K562 (cell line): ENCODE measurements at regions of chr11 and their contacts with region 1.

Region 1: GRCh38 chr11:93543292-93543977 is at the start of gene SMCO4:
- DNase-seq: peak; percentile 85 to 90 (median 87)
- ATAC-seq: peak; percentile 94
- H3K4me3 ChIP-seq: peak within 1 kb of the TSS; percentile 72
- H3K27ac ChIP-seq: peak within 1 kb of the TSS; percentile 38
- H3K4me1 ChIP-seq: peaks cover 13 to 14% of the 10 kb centered on the region in 2 experiments
- H3K27me3 ChIP-seq: no peaks in the 10 kb centered on the region; a peak in 1 of 5 replicates
- CTCF ChIP-seq: peak; percentile 60 to 87 (median 86)
- EP300 ChIP-seq: 0 out of 2 replicates have a peak, but pooled peaks have one; percentile 20
- POLR2A ChIP-seq: peak; percentile 56
- RAD21 ChIP-seq: peak; percentile 82 to 83
- polyA plus RNA-seq, gene SMCO4: 1.8 to 2.2 TPM

Region 2: DNA sequence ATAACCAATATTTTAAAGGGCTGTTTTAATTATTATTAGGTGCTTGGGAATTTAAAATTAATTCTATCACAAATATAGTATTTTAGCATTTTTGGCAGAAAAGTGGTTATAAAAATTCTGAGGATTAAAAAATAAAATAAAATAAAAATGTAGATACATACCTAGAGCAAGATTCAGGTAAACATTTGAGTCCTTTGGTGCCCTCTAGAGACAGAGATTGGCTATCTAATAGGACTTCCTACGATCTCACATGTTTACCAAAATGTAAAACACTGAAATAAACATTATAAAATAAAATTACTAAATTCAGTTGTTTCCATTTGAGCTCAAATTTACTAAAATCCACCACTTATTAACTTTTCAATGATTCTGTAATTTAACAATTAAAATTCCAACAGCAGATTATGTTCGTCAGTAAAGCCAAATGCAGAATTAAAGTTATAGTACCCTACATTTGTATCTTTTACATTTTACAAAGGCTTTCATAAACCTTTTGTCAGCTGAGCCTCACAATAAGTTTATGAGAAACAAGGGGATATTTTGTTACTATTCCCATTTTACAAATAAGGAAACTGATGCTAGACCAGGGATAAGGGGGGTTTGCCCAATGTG is 373.4 kb before region 1 on chr11:
- CTCF ChIA-PET with region 1: no interaction called
- POLR2A ChIA-PET with region 1: no interaction called
- in situ Hi-C with region 1: no loop called
- intact Hi-C with region 1: no loop called
- DNase-seq: peak in 1 of 4 experiments; percentile 24
- ATAC-seq: peak; percentile 54; the same call in 1 of the 3 replicates
- H3K4me3 ChIP-seq: no peak overlapping the region
- H3K27ac ChIP-seq: no peak overlapping the region
- H3K4me1 ChIP-seq: no peaks in the 10 kb centered on the region
- H3K27me3 ChIP-seq: no peaks in the 10 kb centered on the region; a peak in 1 of 5 replicates
- CTCF ChIP-seq: peak in 2 of 3 experiments; percentile 12 to 41; a peak in 3 of 6 replicates
- EP300 ChIP-seq: no peak
- POLR2A ChIP-seq: no peak
- RAD21 ChIP-seq: peak; percentile 35 to 51; a peak in 3 of 4 replicates

Region 3: DNA sequence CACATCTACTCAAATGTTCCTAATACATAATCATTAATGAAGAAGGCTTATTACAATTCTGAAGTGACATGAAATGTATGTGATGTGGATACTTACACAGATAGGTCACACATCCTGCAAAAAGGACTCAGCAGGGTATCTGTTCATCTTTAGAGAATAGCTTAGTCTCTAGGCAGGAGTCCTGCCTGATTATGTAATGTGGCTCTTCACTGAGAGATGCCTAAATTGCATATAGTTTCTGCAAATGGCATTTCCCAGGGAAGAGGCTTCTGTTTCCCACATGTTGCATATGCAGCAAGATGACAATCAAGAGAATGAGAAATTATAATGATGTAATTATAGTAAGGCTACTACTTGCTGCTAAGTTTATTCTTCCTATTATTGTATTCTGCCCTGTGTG is 286.8 kb before region 1 on chr11:
- CTCF ChIA-PET with region 1: no interaction called
- POLR2A ChIA-PET with region 1: no interaction called
- in situ Hi-C with region 1: no loop called
- intact Hi-C with region 1: no loop called
- DNase-seq: no peak
- ATAC-seq: no peak
- H3K4me3 ChIP-seq: no peak overlapping the region
- H3K27ac ChIP-seq: no peak overlapping the region
- H3K4me1 ChIP-seq: no peaks in the 10 kb centered on the region
- H3K27me3 ChIP-seq: no peaks in the 10 kb centered on the region
- CTCF ChIP-seq: no peak
- EP300 ChIP-seq: no peak
- POLR2A ChIP-seq: no peak
- RAD21 ChIP-seq: no peak

Region 4: GRCh38 chr11:93330446-93330984 is 212.9 kb before region 1 on chr11 and contains the start of gene DEUP1:
- CTCF ChIA-PET with region 1: no interaction called
- POLR2A ChIA-PET with region 1: no interaction called
- in situ Hi-C with region 1: no loop called
- intact Hi-C with region 1: loop called (anchors 10 kb)
- DNase-seq: peak; percentile 75 to 85 (median 82)
- ATAC-seq: peak; percentile 95
- H3K4me3 ChIP-seq: peak within 1 kb of the TSS; percentile 51
- H3K27ac ChIP-seq: peak within 1 kb of the TSS; percentile 78
- H3K4me1 ChIP-seq: peaks cover 6 to 7% of the 10 kb centered on the region in 2 experiments; a peak in 2 of 5 replicates
- H3K27me3 ChIP-seq: no peaks in the 10 kb centered on the region
- CTCF ChIP-seq: no peak
- EP300 ChIP-seq: 0 out of 2 replicates have a peak, but pooled peaks have one; percentile 18
- POLR2A ChIP-seq: peak; percentile 60; the same call in 1 of the 2 replicates
- RAD21 ChIP-seq: no peak
- polyA plus RNA-seq, gene DEUP1: 7.8 to 9.8 TPM

Region 5: GRCh38 chr11:93623179-93623578 is 79.7 kb after region 1 on chr11:
- CTCF ChIA-PET with region 1: no interaction called
- POLR2A ChIA-PET with region 1: no interaction called
- in situ Hi-C with region 1: no loop called
- intact Hi-C with region 1: loop called (anchors 5 kb)
- DNase-seq: no peak
- ATAC-seq: no peak
- H3K4me3 ChIP-seq: no peak overlapping the region
- H3K27ac ChIP-seq: no peak overlapping the region
- H3K4me1 ChIP-seq: 0 out of 5 replicates have a peak, but pooled peaks cover 0 to 3% of the 10 kb centered on the region in 2 experiments
- H3K27me3 ChIP-seq: peaks cover 0 to 4% of the 10 kb centered on the region in 2 experiments; a peak in 2 of 5 replicates
- CTCF ChIP-seq: no peak
- EP300 ChIP-seq: no peak
- POLR2A ChIP-seq: no peak
- RAD21 ChIP-seq: no peak

Region 6: DNA sequence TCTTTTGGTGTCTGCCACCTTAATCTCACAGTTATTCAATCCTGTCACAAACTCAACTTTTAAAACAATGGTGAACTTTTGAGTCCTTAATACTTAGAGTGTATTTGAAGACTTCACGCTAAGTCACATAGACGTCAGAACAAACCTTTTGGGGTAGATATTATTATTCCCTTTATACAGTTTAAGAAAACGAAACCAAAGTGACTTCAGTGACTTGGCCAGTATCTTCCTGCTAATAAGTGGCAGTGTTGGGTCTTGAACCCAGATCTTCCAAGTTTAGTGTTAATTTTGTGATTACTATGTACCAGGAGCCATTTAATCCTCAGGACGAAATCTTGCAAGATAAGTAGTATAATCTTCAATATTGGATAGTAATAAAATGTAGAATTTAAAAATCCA is 118.7 kb after region 1 on chr11:
- CTCF ChIA-PET with region 1: no interaction called
- POLR2A ChIA-PET with region 1: interaction called, 3 read pairs
- in situ Hi-C with region 1: no loop called
- intact Hi-C with region 1: loop called (anchors 5 kb)
- DNase-seq: peak in 1 of 4 experiments; percentile 23
- ATAC-seq: peak; percentile 4
- H3K4me3 ChIP-seq: peak overlapping the region; percentile 91
- H3K27ac ChIP-seq: peak overlapping the region; percentile 95
- H3K4me1 ChIP-seq: peaks cover 0 to 10% of the 10 kb centered on the region in 2 experiments; a peak in 2 of 5 replicates
- H3K27me3 ChIP-seq: peaks cover 2 to 4% of the 10 kb centered on the region in 2 experiments; a peak in 1 of 5 replicates
- CTCF ChIP-seq: no peak
- EP300 ChIP-seq: no peak
- POLR2A ChIP-seq: no peak
- RAD21 ChIP-seq: no peak

Region 7: DNA sequence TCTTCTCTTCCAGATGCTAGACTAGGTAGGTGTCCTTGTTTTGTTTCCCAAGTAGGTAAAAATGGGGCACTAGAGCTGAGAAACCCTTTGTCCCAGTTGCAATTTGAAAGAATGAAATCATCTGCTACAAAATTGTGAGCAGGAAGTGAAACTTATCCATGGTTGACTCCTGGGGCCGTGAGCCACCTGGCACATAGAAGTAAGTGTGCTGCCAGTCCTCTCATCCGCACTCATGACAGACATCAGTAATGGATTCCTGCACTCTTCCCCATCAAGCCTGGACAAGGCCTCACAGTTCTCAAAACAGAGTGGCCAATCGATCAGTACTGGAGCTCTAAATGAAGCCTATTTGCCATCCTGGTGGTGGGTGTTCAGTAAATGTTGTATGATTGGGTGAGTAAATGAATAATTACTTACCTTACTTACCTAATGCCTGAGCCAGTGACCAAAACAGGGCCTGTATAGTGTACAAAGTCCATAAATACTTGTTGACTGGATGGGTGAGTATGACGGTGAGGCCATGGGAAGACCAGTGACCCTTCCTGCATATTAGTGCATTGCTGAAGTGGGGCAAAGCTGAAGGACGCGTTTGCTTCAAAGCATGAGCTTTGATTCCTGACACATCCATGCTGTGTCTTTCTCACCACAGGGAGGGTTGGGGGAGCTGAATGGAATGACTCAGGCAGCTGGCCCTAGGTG is 408.8 kb after region 1 on chr11:
- CTCF ChIA-PET with region 1: no interaction called
- POLR2A ChIA-PET with region 1: no interaction called
- in situ Hi-C with region 1: no loop called
- intact Hi-C with region 1: no loop called
- DNase-seq: no peak
- ATAC-seq: no peak
- H3K4me3 ChIP-seq: no peak overlapping the region
- H3K27ac ChIP-seq: no peak overlapping the region
- H3K4me1 ChIP-seq: no peaks in the 10 kb centered on the region
- H3K27me3 ChIP-seq: no peaks in the 10 kb centered on the region
- CTCF ChIP-seq: no peak
- EP300 ChIP-seq: no peak
- POLR2A ChIP-seq: no peak
- RAD21 ChIP-seq: no peak